Posterior cingulate gyrus (tissue), 11 donors: ENCODE measurements at regions of chrX and their contacts with region 1.

Region 1: DNA sequence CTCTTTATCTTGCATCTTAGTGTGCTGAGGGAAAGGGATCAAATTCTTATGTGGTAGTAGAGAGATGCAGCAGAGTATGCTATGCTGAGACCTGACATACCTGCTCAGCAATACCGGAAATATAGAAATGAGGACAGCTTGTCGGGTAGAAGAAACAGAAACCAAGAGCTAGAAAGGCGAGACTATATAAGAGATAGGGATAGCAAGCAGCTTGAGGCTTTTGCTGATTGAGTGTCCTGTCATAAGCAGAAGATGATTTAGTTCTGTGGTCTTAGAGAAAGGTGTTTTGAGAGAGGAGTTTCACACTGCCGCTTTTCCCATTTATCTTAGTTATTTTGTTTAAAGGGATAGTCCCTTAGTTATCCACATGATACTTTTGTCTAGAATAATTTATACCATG is 31.7 kb downstream of the USP9X start:
- DNase-seq: no peak

Region 2: DNA sequence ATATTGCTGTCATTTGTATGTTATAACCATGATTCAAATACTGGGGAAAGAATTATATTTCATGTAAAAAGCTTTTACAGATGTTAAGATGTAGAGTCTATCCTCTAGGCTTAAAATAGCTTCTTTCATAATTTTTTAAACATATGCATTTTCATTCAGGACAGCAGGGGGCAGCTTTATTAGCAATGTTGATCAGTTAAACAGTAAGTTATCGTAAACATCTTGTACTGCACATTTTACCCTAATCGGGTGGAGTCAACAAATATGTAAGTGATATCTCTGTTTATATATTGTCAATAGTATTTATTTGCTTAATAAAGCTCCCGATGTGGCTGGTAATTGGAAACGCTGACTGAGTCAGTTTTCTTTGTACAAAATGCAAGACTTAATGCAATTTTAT is 239.1 kb before region 1 on chrX:
- intact Hi-C with region 1: loop called (anchors 2 kb)
- DNase-seq: no peak

Region 3: DNA sequence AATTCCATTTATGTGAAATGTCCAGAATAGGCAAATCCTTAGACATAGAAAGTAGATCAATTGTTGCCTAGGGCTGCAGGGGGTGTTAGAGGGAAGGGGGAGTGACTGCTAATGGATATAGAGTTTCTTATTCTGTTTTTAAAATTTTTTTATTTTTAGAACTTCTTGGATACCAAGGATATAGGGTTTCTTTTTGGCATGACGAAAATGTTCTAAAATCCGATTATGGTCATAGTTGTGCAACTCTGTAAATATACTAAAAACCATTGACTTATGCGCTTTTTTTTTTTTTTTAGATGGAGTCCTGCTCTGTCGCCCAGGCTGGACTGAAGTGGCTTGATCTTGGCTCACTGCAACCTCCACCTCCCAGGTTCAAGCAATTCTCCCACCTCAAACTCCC is 156.9 kb before region 1 on chrX:
- intact Hi-C with region 1: no loop called
- DNase-seq: no peak

Region 4: GRCh38 chrX:41022579-41022978 is 94.4 kb before region 1 on chrX:
- intact Hi-C with region 1: no loop called
- DNase-seq: no peak